Activated B cell treated with CpG ODN at 0.5 μM for 24 hours (primary cell): ENCODE measurements at regions of chr22 and their contacts with region 1.

Region 1: DNA sequence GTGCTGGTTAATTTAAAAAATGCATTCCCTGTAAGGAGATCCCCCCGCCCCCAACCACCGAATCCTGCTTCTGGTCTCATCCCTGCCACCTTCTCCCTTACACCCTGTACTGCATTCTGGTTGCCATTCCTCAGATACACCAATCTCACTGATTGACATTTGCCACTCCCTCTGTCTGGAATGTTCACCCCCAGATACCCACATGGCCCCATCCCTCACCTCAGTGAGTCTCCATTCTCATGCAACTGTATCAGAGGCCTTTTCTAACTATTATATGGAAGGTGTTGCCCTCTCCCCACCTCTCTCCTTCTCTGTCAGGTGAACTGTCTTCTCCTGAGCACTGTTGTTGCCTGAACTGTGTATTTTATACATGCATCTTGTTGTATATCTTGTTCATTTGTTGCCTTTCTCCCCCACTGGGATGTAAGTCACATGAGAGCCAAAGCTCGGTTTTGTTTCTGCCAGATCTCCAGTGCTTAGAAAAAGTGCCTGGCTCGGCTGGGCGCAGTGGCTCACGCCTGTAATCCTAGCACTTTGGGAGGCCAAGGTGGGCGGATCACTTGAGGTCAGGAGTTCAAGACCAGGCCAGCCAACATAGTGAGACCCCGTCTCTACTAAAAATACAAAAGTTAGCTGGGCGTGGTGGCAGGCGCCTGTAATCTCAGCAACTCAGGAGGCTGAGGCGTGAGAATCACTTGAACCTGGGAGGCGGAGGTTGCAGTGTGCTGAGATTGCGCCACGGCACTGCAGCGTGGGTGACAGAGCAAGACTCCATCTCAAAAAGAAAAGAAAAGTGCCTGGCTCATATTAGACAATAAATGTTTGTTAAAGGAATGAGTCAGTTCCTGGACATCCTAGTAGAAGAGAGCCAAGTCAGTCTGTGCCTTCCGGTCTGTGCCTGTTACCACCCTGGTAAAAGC is 61.0 kb downstream of the TNRC6B start:
- DNase-seq: no peak
- ATAC-seq: no peak
- H3K4me3 Mint-ChIP-seq: no peak overlapping the region
- H3K27ac Mint-ChIP-seq: peak overlapping the region; percentile 57
- H3K4me1 Mint-ChIP-seq: peaks cover 81% of the 10 kb centered on the region
- H3K27me3 Mint-ChIP-seq: no peaks in the 10 kb centered on the region
- CTCF ChIP-seq: no peak

Region 2: GRCh38 chr22:39699631-39700360 is 538.9 kb before region 1 on chr22:
- CTCF ChIA-PET with region 1: no interaction called
- POLR2A ChIA-PET with region 1: no interaction called
- intact Hi-C with region 1: no loop called
- DNase-seq: no peak
- ATAC-seq: no peak
- H3K4me3 Mint-ChIP-seq: no peak overlapping the region
- H3K27ac Mint-ChIP-seq: no peak overlapping the region
- H3K4me1 Mint-ChIP-seq: no peaks in the 10 kb centered on the region
- H3K27me3 Mint-ChIP-seq: peaks cover 8% of the 10 kb centered on the region
- CTCF ChIP-seq: no peak

Region 3: GRCh38 chr22:40203572-40203971 is 35.1 kb before region 1 on chr22:
- CTCF ChIA-PET with region 1: no interaction called
- POLR2A ChIA-PET with region 1: no interaction called
- intact Hi-C with region 1: loop called (anchors 5 kb)
- DNase-seq: no peak
- ATAC-seq: peak; percentile 82
- H3K4me3 Mint-ChIP-seq: peak overlapping the region; percentile 55
- H3K27ac Mint-ChIP-seq: peak overlapping the region; percentile 81
- H3K4me1 Mint-ChIP-seq: peaks cover 71% of the 10 kb centered on the region
- H3K27me3 Mint-ChIP-seq: no peaks in the 10 kb centered on the region
- CTCF ChIP-seq: no peak